Tibial artery (tissue), 4 donors: ENCODE measurements at regions of chr2 and their contacts with region 1.

Region 1: GRCh38 chr2:28276076-28276618 is 116.5 kb upstream of the FOSL2 start:
- DNase-seq: no peak
- H3K4me3 ChIP-seq: no peak overlapping the region
- H3K27ac ChIP-seq: peak overlapping the region; percentile 20 to 53
- H3K4me1 ChIP-seq: peaks cover 0 to 28% (median 15%) of the 10 kb centered on the region in 4 donors
- H3K27me3 ChIP-seq: no peaks in the 10 kb centered on the region
- CTCF ChIP-seq: no peak

Region 2: DNA sequence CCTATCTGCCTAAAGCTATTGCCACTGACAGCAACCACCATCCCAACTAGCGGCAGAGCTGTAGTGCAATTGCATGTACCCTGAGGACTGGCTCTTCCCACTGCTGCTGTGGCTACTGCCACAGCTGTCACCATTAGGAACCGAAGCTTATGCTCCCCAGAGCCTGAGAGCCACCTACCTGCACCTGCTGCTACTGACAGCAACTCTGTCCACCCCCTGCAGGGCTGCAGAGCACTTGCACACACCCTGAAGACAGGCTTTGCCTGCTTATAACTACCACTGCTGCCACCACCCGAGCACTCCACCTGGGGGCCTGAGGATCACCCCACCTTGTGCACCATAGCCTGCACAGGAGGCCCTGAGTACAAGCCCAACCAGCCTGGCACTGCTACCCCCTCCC is 101.1 kb before region 1 on chr2:
- intact Hi-C with region 1: no loop called
- DNase-seq: no peak
- H3K4me3 ChIP-seq: no peak overlapping the region
- H3K27ac ChIP-seq: no peak overlapping the region
- H3K4me1 ChIP-seq: no peaks in the 10 kb centered on the region
- H3K27me3 ChIP-seq: no peaks in the 10 kb centered on the region
- CTCF ChIP-seq: no peak

Region 3: GRCh38 chr2:28257182-28257581 is 19.0 kb before region 1 on chr2:
- intact Hi-C with region 1: no loop called
- DNase-seq: no peak
- H3K4me3 ChIP-seq: no peak overlapping the region
- H3K27ac ChIP-seq: no peak overlapping the region
- H3K4me1 ChIP-seq: no peaks in the 10 kb centered on the region
- H3K27me3 ChIP-seq: no peaks in the 10 kb centered on the region
- CTCF ChIP-seq: no peak

Region 4: DNA sequence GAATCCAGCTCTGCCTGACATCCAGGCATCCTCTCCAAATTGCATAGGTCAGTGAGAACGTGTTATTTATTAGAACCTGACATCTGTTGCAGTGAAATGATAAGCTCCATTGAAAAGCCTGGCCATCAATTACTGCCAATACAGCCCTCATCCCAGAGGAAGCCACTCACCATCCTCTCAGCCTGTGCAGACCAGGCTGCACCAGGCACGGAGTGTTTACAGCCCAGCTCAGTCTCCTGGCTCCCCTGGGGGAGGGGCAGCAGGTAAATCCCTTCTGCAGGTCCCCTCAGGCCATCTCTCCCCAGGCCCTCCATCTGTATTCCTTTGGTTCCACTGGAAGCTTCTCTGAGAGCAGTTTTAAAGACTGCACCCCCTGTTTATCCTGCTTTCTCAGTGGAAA is 34.0 kb after region 1 on chr2:
- intact Hi-C with region 1: loop called (anchors 1 kb)
- DNase-seq: no peak
- H3K4me3 ChIP-seq: no peak overlapping the region
- H3K27ac ChIP-seq: no peak overlapping the region
- H3K4me1 ChIP-seq: no peaks in the 10 kb centered on the region
- H3K27me3 ChIP-seq: no peaks in the 10 kb centered on the region
- CTCF ChIP-seq: no peak

Region 5: GRCh38 chr2:28377984-28378678 is 102.0 kb after region 1 on chr2:
- intact Hi-C with region 1: no loop called
- DNase-seq: no peak
- H3K4me3 ChIP-seq: no peak overlapping the region
- H3K27ac ChIP-seq: no peak overlapping the region
- H3K4me1 ChIP-seq: peaks cover 0 to 4% (median 0%) of the 10 kb centered on the region in 4 donors
- H3K27me3 ChIP-seq: no peaks in the 10 kb centered on the region
- CTCF ChIP-seq: no peak